PC-9 (cell line): ENCODE measurements at regions of chr9 and their contacts with region 1.

Region 1: DNA sequence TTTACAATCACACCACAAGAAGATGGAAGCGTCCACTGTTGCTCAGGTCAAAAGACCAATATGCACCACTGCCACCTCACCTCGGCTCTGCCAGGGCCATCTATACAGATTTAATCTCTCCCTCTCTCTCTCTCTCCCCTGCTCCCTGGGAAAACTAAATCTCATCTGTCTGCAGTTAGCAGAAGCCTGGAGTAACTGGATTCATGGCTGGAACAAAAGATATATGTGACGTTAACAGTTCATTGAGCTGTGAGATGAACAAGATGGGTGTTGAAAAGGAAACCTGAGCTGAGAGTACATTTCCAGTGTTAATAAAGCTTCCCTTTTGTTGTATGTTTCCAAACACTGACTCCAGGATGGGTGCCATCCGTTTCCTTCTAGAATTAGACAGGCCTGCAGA is 369.7 kb downstream of the CDK5RAP2 start:
- DNase-seq: no peak
- H3K4me3 ChIP-seq: no peak overlapping the region
- H3K27ac ChIP-seq: no peak overlapping the region
- H3K4me1 ChIP-seq: no peaks in the 10 kb centered on the region
- H3K27me3 ChIP-seq: peaks cover 28% of the 10 kb centered on the region
- CTCF ChIP-seq: no peak

Region 2: DNA sequence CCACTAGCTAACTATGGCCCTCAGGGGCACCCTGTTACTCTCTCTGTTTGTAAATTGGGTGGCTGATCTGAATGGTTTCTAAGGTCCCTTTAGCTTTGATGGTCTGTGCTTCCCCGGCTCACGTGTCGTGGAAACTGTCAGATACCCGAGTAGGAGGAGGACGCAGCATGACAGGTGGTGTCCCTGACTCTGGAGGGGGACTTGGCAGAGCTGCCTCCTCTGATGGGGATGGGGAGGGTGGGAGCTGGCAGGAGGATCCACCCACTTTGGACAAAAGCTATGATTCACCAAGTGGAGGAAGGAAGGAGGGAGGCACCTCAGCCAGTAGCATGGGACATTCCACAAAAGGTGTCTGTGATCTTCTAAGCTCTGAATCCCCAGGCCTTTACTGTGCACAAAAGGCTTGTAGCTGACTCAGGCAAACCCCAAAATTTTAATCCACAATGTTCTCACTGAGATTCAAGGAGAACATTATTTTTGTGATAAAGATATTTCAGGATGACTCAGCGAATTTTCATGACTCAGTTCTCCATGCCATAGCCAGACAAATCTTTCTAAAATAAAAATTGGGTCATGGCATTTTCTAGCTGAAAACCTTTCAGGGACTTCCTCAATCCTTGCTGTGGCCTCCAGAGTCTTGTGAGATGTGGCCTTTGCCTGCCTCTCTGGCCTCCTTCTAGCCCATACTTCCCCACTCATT is 710.1 kb before region 1 on chr9:
- CTCF ChIA-PET with region 1: no interaction called
- POLR2A ChIA-PET with region 1: no interaction called
- intact Hi-C with region 1: no loop called
- DNase-seq: no peak
- H3K4me3 ChIP-seq: no peak overlapping the region
- H3K27ac ChIP-seq: no peak overlapping the region
- H3K4me1 ChIP-seq: no peaks in the 10 kb centered on the region
- H3K27me3 ChIP-seq: no peaks in the 10 kb centered on the region
- CTCF ChIP-seq: no peak

Region 3: GRCh38 chr9:120066315-120066714 is 144.0 kb before region 1 on chr9:
- CTCF ChIA-PET with region 1: no interaction called
- POLR2A ChIA-PET with region 1: no interaction called
- intact Hi-C with region 1: no loop called
- DNase-seq: no peak
- H3K4me3 ChIP-seq: no peak overlapping the region
- H3K27ac ChIP-seq: no peak overlapping the region
- H3K4me1 ChIP-seq: no peaks in the 10 kb centered on the region
- H3K27me3 ChIP-seq: no peaks in the 10 kb centered on the region
- CTCF ChIP-seq: no peak

Region 4: GRCh38 chr9:120175031-120175430 is 35.2 kb before region 1 on chr9:
- CTCF ChIA-PET with region 1: no interaction called
- POLR2A ChIA-PET with region 1: no interaction called
- intact Hi-C with region 1: no loop called
- DNase-seq: no peak
- H3K4me3 ChIP-seq: no peak overlapping the region
- H3K27ac ChIP-seq: no peak overlapping the region
- H3K4me1 ChIP-seq: no peaks in the 10 kb centered on the region
- H3K27me3 ChIP-seq: peaks cover 9% of the 10 kb centered on the region
- CTCF ChIP-seq: no peak

Region 5: DNA sequence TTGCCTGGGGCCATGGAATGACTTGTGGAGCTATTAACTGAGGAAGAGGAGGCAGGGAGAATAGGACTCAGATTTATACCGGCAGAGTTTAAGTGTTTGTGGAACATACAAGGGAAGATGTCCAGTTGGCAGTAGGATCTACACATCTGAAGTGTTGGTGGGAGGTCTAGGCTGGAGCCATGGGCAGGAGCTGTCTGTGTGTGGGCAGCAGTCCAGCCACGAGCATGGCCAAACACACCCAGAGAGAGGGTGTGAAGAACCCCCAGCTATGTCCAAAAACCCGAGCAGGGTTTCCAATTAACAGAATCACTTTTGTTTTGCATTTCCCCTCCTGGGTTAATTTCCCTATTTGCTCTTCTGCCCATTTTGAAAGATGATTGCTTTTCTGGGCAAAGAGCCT is 24.0 kb before region 1 on chr9:
- CTCF ChIA-PET with region 1: no interaction called
- POLR2A ChIA-PET with region 1: no interaction called
- intact Hi-C with region 1: no loop called
- DNase-seq: no peak
- H3K4me3 ChIP-seq: no peak overlapping the region
- H3K27ac ChIP-seq: no peak overlapping the region
- H3K4me1 ChIP-seq: no peaks in the 10 kb centered on the region
- H3K27me3 ChIP-seq: peaks cover 10% of the 10 kb centered on the region; the same call in 1 of the 2 replicates
- CTCF ChIP-seq: no peak

Region 6: GRCh38 chr9:120436983-120437475 is 226.8 kb after region 1 on chr9:
- CTCF ChIA-PET with region 1: no interaction called
- POLR2A ChIA-PET with region 1: interaction called, 10 read pairs
- intact Hi-C with region 1: no loop called
- DNase-seq: no peak
- H3K4me3 ChIP-seq: no peak overlapping the region
- H3K27ac ChIP-seq: no peak overlapping the region
- H3K4me1 ChIP-seq: no peaks in the 10 kb centered on the region
- H3K27me3 ChIP-seq: no peaks in the 10 kb centered on the region
- CTCF ChIP-seq: no peak